Vagina (tissue), 2 donors: ENCODE measurements at regions of chr10 and their contacts with region 1.

Region 1: GRCh38 chr10:85400981-85401695 is 965.5 kb downstream of the GRID1 start:
- DNase-seq: no peak
- H3K4me3 ChIP-seq: no peak overlapping the region
- H3K27ac ChIP-seq: no peak overlapping the region
- H3K4me1 ChIP-seq: no peaks in the 10 kb centered on the region
- H3K27me3 ChIP-seq: no peaks in the 10 kb centered on the region
- CTCF ChIP-seq: no peak
- POLR2A ChIP-seq: no peak

Region 2: DNA sequence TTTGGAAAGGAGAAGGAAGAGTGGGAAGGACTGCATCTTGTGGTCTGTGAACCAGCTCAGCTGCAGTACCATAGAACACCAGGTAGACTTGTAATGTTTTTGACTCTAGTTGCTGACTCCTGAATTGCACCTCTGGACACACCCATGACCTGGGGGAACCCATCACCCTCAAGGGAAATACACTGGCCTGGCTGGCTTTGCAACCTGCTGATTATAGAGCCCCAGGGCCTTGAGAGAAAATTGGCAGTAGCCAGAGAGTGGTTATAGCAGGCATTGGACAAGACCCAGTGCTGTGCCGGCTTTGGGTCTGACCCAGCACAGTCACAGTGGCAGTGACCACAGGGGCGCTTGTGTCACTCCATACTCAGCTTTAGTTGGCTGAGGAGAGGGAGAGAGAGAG is 63.2 kb after region 1 on chr10:
- intact Hi-C with region 1: loop called (anchors 2 kb)
- DNase-seq: no peak
- H3K4me3 ChIP-seq: no peak overlapping the region
- H3K27ac ChIP-seq: no peak overlapping the region
- H3K4me1 ChIP-seq: no peaks in the 10 kb centered on the region
- H3K27me3 ChIP-seq: no peaks in the 10 kb centered on the region
- CTCF ChIP-seq: no peak
- POLR2A ChIP-seq: no peak